ENCODE measurements at regions of chr12 and their contacts with region 1.

Region 1: GRCh38 chr12:95473884-95474659 is at the start of gene METAP2:
- DNase-seq: peak; percentile 97
- H3K4me3 ChIP-seq: peak within 1 kb of the TSS; percentile 85
- H3K27ac ChIP-seq: peak within 1 kb of the TSS; percentile 94
- H3K4me1 ChIP-seq: no peaks in the 10 kb centered on the region
- H3K27me3 ChIP-seq: no peaks in the 10 kb centered on the region
- CTCF ChIP-seq: no peak
- total RNA-seq, gene METAP2: 49.5 to 53.8 TPM

Region 2: DNA sequence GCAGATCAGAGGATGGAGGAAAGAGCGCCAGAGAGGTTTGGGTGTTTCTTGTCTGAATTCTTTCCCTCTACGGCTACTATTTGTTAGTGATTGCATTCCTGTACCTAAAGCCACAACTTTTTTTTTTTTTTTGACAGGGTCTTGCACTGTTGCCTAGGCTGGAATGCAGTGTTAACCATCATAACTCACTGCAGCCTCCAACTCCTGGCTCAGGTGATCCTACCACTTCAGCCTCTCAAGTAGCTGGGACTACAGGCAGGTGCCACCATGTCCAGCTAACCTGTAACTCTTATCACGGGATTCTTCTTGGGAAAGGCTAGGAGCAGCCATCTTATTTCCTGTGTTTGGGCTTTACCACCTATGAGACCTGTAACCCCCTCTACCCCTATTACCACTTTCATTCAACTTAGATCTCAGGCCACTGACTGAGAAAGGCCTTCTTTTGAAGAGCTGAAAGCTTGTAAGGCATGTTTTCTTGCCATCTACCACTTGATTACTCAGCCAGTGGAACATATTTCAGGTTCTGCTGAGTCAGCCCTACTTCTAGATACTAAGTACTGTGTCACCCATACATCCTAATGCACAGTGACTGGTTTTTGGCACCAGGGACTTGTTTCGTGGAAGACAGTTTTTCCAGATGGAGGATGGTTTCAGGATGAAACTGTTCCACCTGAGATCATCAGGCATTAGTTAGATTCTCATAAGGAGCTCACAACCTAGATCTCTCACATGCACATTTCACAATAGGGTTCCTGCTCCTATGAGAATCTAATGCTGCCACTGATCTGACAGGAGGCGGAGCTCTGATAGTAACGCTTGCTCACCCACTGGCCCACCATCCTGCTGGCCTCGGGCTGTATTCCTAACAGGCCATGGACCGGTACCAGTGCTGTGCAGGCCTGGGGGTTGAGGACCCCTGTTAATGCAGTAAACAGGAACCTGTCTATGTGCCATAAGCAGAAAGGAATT is 249.6 kb before region 1 on chr12:
- intact Hi-C with region 1: loop called (anchors 10 kb)
- DNase-seq: no peak
- H3K4me3 ChIP-seq: no peak overlapping the region
- H3K27ac ChIP-seq: no peak overlapping the region
- H3K4me1 ChIP-seq: peaks cover 8% of the 10 kb centered on the region
- H3K27me3 ChIP-seq: no peaks in the 10 kb centered on the region
- CTCF ChIP-seq: no peak